Activated CD4-positive, alpha-beta T cell treated with anti-CD3 and anti-CD28 coated beads, Interleukin-2, amount 10 ng/mL, durations not matched to agents 7 days and 5 days (primary cell): ENCODE measurements at regions of chr17 and their contacts with region 1.

Region 1: GRCh38 chr17:41311111-41311510 is 2.0 kb upstream of the KRTAP16-1 start:
- DNase-seq: no peak
- H3K4me3 Mint-ChIP-seq: no peak overlapping the region
- H3K27ac Mint-ChIP-seq: no peak overlapping the region
- H3K4me1 Mint-ChIP-seq: peaks cover 53% of the 10 kb centered on the region
- H3K27me3 Mint-ChIP-seq: peaks cover 4% of the 10 kb centered on the region

Region 2: GRCh38 chr17:41251261-41251660 is 59.9 kb before region 1 on chr17:
- CTCF ChIA-PET with region 1: no interaction called
- POLR2A ChIA-PET with region 1: no interaction called
- DNase-seq: no peak
- H3K4me3 Mint-ChIP-seq: no peak overlapping the region
- H3K27ac Mint-ChIP-seq: no peak overlapping the region
- H3K4me1 Mint-ChIP-seq: no peaks in the 10 kb centered on the region
- H3K27me3 Mint-ChIP-seq: peaks cover 34% of the 10 kb centered on the region

Region 3: DNA sequence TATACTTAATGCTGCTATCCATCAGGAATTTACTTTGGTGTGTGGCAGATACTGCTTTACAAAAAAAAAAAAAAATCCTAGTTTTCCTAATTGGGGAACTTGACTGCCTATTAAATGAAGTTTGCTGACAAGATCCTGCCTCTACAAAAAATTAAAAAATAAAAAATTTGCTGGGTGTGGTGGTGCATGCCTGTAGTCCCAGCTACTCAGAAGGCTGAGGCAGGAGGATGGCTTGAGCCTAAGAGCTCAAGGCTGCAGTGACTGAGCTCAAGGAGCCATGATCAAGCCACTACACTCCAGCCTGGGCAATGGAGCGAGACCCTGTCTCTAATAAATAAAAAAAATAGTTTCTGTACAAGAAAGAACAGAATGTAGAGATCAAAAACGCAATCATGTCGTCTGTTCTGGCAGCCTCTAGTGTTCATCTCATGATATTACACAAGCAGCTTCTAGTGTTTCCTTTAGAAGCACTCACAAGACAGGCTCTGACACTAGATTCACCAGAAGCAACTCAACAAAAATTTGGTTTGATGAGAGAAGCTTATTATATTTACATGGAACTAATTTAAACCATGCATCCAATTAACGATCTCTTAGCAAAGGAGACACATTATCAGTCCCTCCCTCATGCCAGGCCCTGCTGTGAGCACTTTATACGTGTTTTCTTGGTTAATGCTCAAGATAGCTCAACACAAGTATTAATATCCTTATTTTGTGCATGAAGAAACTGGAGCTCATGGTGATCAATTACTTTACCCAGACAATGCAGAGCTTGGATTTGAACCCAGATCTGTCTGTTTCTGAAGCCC is 11.2 kb after region 1 on chr17:
- CTCF ChIA-PET with region 1: interaction called, 10 read pairs
- POLR2A ChIA-PET with region 1: no interaction called
- DNase-seq: peak; percentile 44
- H3K4me3 Mint-ChIP-seq: no peak overlapping the region
- H3K27ac Mint-ChIP-seq: peak overlapping the region; percentile 83
- H3K4me1 Mint-ChIP-seq: peaks cover 32% of the 10 kb centered on the region
- H3K27me3 Mint-ChIP-seq: no peaks in the 10 kb centered on the region